Colonic mucosa (tissue), 4 donors: ENCODE measurements at regions of chr20 and their contacts with region 1.

Region 1: DNA sequence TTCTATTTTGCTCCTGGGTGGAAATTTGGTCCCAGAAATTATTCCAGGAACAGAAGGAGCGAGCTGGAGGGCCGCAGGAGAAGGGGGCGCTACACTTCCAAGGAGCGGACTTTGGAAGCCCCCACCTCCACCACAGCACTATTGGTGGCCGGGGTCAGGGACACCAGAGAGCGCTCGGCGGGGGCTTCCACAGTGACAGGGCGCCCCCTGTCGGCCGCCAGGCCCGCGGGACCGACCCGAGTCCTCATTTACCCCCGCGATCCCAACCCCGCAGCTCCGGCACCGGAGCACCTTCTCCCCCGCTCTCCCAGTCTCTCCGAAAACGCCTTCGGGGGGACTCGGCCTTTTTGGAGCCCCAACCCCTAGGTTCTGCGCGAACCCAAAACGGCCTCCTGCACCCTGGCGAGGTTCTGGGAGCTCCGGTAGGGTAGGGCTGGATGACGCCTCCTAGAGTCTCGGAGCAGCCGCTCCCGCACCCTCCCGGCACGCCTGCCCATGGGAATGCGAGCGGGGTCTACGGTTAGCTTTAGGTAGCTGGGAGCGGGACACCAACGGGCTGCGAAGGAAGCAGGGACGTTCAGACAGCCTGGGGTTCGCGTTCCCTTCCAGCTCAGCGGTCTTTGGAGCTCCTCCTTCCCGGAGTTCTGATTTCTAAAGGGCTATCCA is 2.4 kb upstream of the FOXA2 start:
- DNase-seq: peak; percentile 85
- H3K4me3 ChIP-seq: peak overlapping the region; percentile 27
- H3K27ac ChIP-seq: no peak overlapping the region
- H3K4me1 ChIP-seq: peaks cover 4% of the 10 kb centered on the region
- H3K27me3 ChIP-seq: peaks cover 27% of the 10 kb centered on the region
- CTCF ChIP-seq: peak; percentile 76

Region 2: DNA sequence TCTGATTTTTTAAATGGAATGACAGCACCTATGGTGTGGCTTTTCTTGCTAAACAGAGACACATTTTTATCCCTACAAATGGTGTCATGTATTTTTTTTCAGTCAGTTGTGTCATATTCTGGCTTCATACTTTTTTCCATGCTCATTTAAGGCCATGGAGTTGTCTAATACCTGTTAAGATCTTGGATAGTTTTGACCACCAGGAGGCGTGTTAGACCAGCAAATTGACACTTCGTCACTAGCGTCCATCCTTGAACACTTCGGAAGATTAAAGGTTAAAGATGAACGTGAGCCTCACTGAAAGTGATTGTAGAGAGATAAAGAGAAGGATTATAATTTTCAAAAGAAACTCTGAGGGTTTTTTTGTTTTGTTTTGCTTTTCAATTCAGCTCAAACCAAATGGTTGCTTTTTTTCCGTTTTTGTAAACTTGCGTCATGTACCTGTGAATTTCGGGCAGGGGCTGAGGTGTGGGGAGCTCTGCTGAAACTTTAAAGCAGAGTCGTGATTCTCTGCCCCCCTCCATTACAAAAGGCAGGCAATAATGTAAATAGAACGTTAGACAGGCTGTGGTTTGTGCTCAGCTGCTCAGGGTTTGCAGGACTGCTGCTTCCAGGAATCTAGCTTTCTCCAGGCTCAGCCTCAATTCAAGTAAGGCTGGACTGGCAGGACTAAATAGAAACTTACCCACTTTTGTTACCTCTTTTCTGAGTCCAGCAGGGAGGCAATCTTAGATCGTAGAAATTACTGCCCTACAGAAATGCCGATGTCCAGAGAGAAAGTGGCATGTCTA is 247.5 kb before region 1 on chr20:
- intact Hi-C with region 1: loop called (anchors 2 kb)
- DNase-seq: peak; percentile 78
- H3K4me3 ChIP-seq: no peak overlapping the region
- H3K27ac ChIP-seq: no peak overlapping the region
- H3K4me1 ChIP-seq: no peaks in the 10 kb centered on the region
- H3K27me3 ChIP-seq: no peaks in the 10 kb centered on the region
- CTCF ChIP-seq: peak; percentile 66

Region 3: DNA sequence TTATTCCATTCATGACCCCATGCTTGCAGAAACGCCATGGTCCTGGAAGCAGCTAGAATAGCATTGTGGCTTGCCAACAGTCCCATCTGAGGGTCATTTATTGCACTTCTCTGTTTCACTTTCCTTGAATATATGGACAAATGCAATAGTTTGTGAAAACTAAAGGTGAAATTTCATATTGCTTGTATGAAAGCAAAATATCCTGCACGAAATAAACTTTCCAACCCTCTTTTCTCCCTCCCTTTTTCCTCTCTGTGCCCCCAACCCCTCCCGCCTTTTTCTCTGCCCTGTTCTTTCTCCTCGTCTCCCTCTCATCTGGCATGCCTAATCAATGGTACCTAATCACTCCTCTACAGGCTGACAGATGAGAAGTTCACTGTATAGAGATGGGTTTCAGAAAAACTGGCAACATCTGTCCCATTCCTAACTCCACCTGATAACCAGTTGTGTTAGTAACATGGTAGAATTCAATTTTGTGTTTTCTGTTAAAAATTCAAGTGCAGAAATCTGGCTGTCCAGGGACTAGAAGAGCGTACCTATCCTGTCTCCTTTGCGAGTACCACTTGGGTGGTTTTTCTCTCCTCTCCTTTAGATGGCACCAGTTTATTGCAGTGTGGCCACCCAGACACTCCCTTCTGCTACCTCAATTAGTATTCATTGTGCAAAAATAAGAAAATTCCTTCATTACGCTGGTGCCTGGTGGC is 201.0 kb before region 1 on chr20:
- intact Hi-C with region 1: loop called (anchors 5 kb)
- DNase-seq: no peak
- H3K4me3 ChIP-seq: no peak overlapping the region
- H3K27ac ChIP-seq: no peak overlapping the region
- H3K4me1 ChIP-seq: no peaks in the 10 kb centered on the region
- H3K27me3 ChIP-seq: no peaks in the 10 kb centered on the region
- CTCF ChIP-seq: no peak

Region 4: DNA sequence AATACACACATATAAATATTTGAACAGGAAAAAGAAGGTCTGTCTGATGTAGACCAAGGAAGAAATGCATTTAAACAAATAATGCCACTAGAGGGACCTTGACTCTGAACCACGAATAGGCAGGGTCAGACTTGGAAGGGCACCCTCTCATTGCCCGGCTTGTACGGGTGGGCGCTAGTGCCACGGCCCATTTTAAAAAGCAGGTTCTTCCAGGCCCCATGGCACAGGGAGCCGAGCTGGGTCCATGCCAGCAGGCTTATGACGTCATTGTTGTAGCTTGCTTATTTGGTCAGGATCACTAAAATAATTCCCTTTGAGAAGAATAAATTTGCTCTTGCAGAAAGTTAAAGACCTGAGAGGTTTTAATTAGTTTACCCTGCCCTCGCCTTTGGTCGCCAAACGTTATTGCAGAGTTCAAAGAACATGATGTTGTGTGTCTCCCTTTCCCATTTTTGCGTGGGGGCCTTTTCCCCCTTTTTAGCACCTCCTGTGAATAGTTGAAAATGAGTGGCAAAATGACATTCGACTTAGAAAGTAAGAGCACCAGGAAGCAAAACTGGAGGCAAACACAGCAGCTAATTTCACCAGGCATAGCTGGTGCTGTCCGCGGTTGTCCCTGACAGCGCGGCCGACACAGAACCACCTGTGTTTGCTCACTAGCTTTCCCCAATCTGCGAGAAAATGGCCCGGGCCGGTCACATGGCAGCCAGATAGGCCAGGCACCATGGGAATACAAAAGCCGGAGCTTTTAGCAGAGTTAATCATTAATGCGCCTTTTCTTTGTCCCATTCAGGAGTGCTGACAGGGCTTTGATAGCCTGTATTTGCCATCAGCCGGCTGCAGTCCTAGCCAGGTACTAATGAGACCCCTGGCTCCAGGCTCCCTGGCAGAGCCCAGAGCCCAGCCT is 96.2 kb before region 1 on chr20:
- intact Hi-C with region 1: loop called (anchors 2 kb)
- DNase-seq: peak; percentile 92
- H3K4me3 ChIP-seq: no peak overlapping the region
- H3K27ac ChIP-seq: peak overlapping the region; percentile 64
- H3K4me1 ChIP-seq: no peaks in the 10 kb centered on the region
- H3K27me3 ChIP-seq: no peaks in the 10 kb centered on the region
- CTCF ChIP-seq: no peak

Region 5: GRCh38 chr20:22684072-22684762 is 97.4 kb after region 1 on chr20:
- intact Hi-C with region 1: loop called (anchors 5 kb)
- DNase-seq: peak; percentile 67
- H3K4me3 ChIP-seq: no peak overlapping the region
- H3K27ac ChIP-seq: no peak overlapping the region
- H3K4me1 ChIP-seq: no peaks in the 10 kb centered on the region
- H3K27me3 ChIP-seq: no peaks in the 10 kb centered on the region
- CTCF ChIP-seq: peak; percentile 65